Sigmoid colon (tissue), 7 donors: ENCODE measurements at regions of chr7 and their contacts with region 1.

Region 1: DNA sequence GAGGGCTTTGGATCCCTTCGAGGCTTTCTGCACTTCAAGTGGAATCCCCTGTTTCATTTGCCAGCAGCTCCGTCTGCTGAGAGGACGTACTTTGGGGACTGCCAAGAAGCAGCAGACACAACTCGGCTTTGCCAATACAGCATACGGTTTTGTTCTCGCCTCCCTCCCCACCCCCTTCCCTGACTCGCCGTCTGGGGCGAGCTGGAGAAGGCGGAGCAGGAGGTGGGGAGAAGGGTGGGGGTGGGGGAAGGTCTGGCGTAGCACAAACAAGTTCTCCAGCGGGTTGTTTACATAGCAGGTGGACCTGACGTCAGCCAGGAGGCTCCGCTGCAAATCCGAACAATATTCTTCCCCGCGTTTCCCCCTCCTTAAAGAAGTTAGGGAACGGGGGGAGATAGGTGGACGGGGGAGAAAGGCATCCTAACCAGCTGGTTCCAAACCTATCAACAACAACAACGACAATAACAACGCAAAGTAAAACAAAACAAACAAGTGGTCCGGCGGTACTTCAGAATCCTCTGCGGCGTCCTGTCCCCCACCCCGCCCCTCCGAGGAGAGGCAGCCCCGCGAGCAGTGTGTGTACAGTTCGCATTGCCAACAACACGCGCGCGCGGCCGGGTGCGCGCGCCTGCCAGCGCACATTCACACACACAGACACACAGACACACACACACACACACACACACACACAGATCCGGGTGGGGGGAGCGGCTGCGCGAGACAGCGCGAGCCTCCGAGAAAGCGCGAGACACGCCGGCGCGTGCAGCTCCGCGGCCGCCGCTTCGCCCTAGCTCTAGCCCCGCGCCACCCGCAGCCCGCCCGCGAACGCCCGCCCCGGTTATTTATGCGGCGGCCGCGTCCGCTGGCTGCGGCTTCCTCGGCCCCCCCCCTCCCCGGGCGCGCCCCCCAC is 167.0 kb upstream of the PPP1R3A start:
- DNase-seq: peak; percentile 96
- H3K4me3 ChIP-seq: peak overlapping the region; percentile 74 to 87 (median 82)
- H3K27ac ChIP-seq: peak overlapping the region; percentile 93 to 97 (median 96)
- H3K4me1 ChIP-seq: peaks cover 0 to 34% (median 16%) of the 10 kb centered on the region in 4 donors
- H3K27me3 ChIP-seq: peaks cover 0 to 10% (median 0%) of the 10 kb centered on the region in 3 donors
- CTCF ChIP-seq: no peak
- EP300 ChIP-seq: peak in 3 of 4 donors; percentile 3 to 74 (median 61)
- POLR2A ChIP-seq: peak; percentile 77 to 88

Region 2: GRCh38 chr7:113649556-113649955 is 436.3 kb before region 1 on chr7:
- intact Hi-C with region 1: no loop called
- DNase-seq: no peak
- H3K4me3 ChIP-seq: no peak overlapping the region
- H3K27ac ChIP-seq: no peak overlapping the region
- H3K4me1 ChIP-seq: peaks cover 0 to 20% (median 7%) of the 10 kb centered on the region in 4 donors
- H3K27me3 ChIP-seq: no peaks in the 10 kb centered on the region
- CTCF ChIP-seq: no peak
- EP300 ChIP-seq: no peak
- POLR2A ChIP-seq: no peak

Region 3: GRCh38 chr7:114107522-114107921 is 21.7 kb after region 1 on chr7:
- intact Hi-C with region 1: no loop called
- DNase-seq: no peak
- H3K4me3 ChIP-seq: no peak overlapping the region
- H3K27ac ChIP-seq: peak overlapping the region in 3 of 4 donors; percentile 1 to 67 (median 58)
- H3K4me1 ChIP-seq: peaks cover 0 to 92% (median 55%) of the 10 kb centered on the region in 4 donors
- H3K27me3 ChIP-seq: no peaks in the 10 kb centered on the region
- CTCF ChIP-seq: no peak
- EP300 ChIP-seq: no peak
- POLR2A ChIP-seq: no peak

Region 4: GRCh38 chr7:114405427-114405826 is 319.6 kb after region 1 on chr7:
- intact Hi-C with region 1: loop called (anchors 2 kb)
- DNase-seq: no peak
- H3K4me3 ChIP-seq: no peak overlapping the region
- H3K27ac ChIP-seq: peak overlapping the region in 3 of 4 donors; percentile 20 to 69 (median 67)
- H3K4me1 ChIP-seq: peaks cover 0 to 39% (median 4%) of the 10 kb centered on the region in 4 donors
- H3K27me3 ChIP-seq: no peaks in the 10 kb centered on the region
- CTCF ChIP-seq: peak; percentile 44 to 66 (median 50)
- EP300 ChIP-seq: no peak
- POLR2A ChIP-seq: no peak

Region 5: GRCh38 chr7:114539575-114539974 is 453.7 kb after region 1 on chr7:
- intact Hi-C with region 1: loop called (anchors 10 kb)
- DNase-seq: no peak
- H3K4me3 ChIP-seq: no peak overlapping the region
- H3K27ac ChIP-seq: no peak overlapping the region
- H3K4me1 ChIP-seq: peaks cover 0 to 13% (median 9%) of the 10 kb centered on the region in 4 donors
- H3K27me3 ChIP-seq: no peaks in the 10 kb centered on the region
- CTCF ChIP-seq: peak in 1 of 4 experiments; percentile 18
- EP300 ChIP-seq: no peak
- POLR2A ChIP-seq: no peak

Region 6: DNA sequence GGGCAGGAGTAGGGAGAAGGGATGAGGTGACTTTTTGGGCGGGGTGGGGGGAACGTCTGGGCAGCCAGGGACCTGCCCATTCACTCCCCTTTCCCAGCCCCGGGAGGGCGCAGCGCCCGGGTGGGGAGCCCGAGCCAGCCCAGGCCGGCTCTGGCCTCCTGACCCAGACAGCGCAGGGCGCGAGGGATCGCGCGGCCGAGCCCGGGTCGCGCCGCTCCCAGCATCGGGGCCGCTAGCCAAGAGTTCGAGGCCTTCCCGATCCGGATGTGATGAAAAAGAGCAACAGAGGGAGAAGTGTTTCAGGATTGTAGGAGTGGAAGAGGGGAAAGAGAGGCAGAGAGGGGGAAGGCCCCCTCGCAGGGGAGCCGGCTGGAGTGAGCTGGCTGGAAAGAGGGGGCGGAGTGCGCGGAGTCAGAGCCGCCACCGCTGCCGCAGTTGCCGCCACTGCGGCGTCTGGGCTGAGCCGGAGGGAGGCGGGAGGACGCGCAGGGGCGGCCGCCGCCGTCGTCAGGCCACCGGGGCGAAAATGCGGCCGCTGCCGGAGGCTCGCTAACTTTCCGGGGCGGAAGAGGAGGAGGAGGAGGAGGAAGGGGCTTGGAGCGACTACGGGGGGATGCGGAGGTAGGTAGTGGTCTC is 836.3 kb after region 1 on chr7 and contains the start of gene MDFIC:
- intact Hi-C with region 1: loop called (anchors 5 kb)
- DNase-seq: peak; percentile 72
- H3K4me3 ChIP-seq: peak within 1 kb of the TSS; percentile 75 to 89 (median 84)
- H3K27ac ChIP-seq: peak within 1 kb of the TSS; percentile 84 to 93 (median 88)
- H3K4me1 ChIP-seq: peaks cover 0 to 38% (median 32%) of the 10 kb centered on the region in 4 donors
- H3K27me3 ChIP-seq: no peaks in the 10 kb centered on the region
- CTCF ChIP-seq: no peak
- EP300 ChIP-seq: no peak
- POLR2A ChIP-seq: peak; percentile 14 to 33
- total RNA-seq, gene MDFIC: 33.0 to 58.1 (median 51.1) TPM

Region 7: DNA sequence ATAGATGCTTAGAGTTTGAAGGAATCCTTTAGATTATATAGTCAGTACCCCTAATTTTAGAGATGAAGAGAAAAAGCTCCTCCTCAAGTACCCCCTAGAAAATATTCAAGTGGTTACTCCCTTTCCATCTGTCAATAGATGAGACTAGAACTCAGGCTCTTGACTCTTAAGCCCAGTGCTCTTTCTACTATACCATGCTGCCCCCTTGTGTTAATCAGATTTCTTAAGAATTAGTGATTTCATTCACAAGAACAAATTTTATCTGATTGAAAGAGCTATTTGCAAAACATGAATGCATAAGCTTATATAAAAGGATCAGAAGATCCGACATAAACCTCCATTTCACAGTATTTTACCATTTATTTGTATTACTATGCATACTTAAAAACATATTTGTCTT is 1765.4 kb after region 1 on chr7:
- intact Hi-C with region 1: loop called (anchors 5 kb)
- DNase-seq: no peak
- H3K4me3 ChIP-seq: no peak overlapping the region
- H3K27ac ChIP-seq: no peak overlapping the region
- H3K4me1 ChIP-seq: no peaks in the 10 kb centered on the region
- H3K27me3 ChIP-seq: no peaks in the 10 kb centered on the region
- CTCF ChIP-seq: peak in 2 of 4 experiments; percentile 17 to 38
- EP300 ChIP-seq: no peak
- POLR2A ChIP-seq: no peak